Posterior vena cava (tissue), 2 donors: ENCODE measurements at regions of chrX and their contacts with region 1.

Region 1: DNA sequence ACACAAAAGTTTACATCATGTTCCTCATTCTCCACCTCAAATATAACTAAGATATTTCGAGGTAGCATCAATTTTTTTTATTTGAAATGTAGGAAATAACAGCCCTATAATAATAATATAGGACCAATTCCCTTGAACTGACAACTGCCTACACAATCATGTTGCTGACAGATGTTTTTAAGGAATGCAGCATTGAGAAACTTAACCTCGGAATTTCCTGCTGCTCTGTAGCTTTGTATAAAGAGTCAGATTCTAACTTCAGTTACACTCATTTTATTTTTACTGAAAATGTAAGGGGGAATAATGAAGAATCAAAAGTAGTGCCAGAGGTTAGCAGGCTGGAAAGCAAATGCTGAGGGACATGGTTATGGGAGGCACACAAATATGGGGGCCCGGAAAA is 235.8 kb downstream of the RBMX2 start:
- DNase-seq: no peak

Region 2: GRCh38 chrX:130497531-130497930 is 140.1 kb before region 1 on chrX:
- intact Hi-C with region 1: no loop called
- DNase-seq: no peak

Region 3: DNA sequence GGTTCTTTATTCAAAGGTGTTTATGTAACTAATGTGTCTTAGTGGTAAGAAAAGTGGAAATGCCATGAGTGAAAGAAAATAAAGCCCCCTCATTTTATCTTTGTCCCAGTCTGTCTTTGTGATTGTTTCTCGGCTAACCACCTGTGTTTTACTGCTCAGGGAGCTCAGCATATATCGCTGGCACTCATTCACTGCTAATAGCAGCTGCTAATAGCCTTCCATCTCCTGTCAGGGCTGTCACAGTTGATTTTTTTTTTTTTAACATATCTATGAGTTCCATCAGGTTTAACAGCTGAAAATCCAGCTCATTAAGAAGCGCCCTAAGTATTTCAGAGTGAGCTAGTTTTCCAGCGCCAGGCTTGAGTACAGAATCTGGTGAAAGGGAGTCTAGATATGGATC is 30.2 kb before region 1 on chrX:
- intact Hi-C with region 1: loop called in 1 of 2 experiments (anchors 1 kb)
- DNase-seq: no peak

Region 4: GRCh38 chrX:130658310-130658709 is 20.7 kb after region 1 on chrX:
- intact Hi-C with region 1: no loop called
- DNase-seq: no peak

Region 5: GRCh38 chrX:130793966-130794365 is 156.4 kb after region 1 on chrX:
- intact Hi-C with region 1: no loop called
- DNase-seq: no peak